Panc1 (cell line): ENCODE measurements at regions of chr16 and their contacts with region 1.

Region 1: GRCh38 chr16:46853713-46854443 is 22.9 kb upstream of the C16orf87 start:
- DNase-seq: peak; percentile 52
- ATAC-seq: peak; percentile 87
- H3K4me3 ChIP-seq: no peak overlapping the region
- H3K27ac ChIP-seq: no peak overlapping the region
- H3K4me1 ChIP-seq: no peaks in the 10 kb centered on the region
- H3K27me3 ChIP-seq: no peaks in the 10 kb centered on the region
- CTCF ChIP-seq: peak; percentile 87

Region 2: DNA sequence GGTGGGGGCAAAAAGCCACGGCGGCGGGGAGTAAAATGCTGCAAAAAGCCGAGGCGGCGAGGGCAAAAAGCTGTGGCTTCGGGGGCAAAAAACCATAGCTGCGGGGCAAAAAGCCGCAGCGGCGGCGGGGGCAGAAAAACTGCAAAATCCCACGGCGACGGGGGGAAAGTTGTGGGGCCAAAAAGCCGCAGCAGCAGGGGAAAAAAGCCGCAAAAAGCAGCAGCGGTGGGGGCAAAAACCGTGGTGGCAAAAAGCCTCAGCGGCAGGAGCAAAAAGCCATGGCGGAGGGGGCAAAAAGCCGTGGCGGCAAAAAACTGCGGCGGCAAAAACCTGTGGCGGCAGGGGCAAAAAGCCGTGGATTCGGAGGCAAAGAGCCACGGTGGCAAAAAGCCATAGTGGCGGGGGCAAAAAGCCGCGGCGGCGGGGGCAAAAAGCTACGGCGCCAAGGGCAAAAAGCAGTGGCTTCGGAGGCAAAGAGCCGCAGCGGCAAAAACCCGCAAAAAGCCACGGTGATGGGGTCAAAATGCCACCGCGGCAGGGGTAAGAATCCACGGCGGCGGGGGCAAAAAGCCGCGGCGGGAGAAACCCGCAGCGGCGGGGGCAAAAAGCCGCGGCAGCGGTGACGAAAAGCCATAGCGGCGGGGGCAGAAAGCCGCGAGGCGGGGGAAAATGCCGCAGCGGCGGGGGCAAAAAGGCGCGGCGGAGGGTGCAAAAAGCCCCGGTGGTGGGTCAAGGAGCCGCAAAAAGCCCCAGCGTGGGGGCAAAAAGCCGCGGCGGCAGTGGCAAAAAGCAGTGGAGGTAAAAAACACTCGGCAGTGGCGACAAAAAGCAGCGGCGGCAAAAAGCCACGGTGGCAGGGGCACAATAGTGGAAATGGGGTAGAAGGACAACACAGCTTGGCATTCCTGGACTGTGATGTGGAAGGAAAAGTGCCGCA is 425.5 kb before region 1 on chr16:
- CTCF ChIA-PET with region 1: no interaction called
- POLR2A ChIA-PET with region 1: no interaction called
- in situ Hi-C with region 1: no loop called
- intact Hi-C with region 1: no loop called
- DNase-seq: no peak
- ATAC-seq: no peak
- H3K4me3 ChIP-seq: no peak overlapping the region
- H3K27ac ChIP-seq: no peak overlapping the region
- H3K4me1 ChIP-seq: no peaks in the 10 kb centered on the region
- H3K27me3 ChIP-seq: no peaks in the 10 kb centered on the region
- CTCF ChIP-seq: no peak

Region 3: GRCh38 chr16:46908540-46909372 is 54.9 kb after region 1 on chr16:
- CTCF ChIA-PET with region 1: interaction called, 11 read pairs
- POLR2A ChIA-PET with region 1: interaction called, 6 read pairs
- in situ Hi-C with region 1: no loop called
- intact Hi-C with region 1: loop called (anchors 1 kb)
- DNase-seq: peak; percentile 27
- ATAC-seq: peak; percentile 80
- H3K4me3 ChIP-seq: no peak overlapping the region
- H3K27ac ChIP-seq: no peak overlapping the region
- H3K4me1 ChIP-seq: no peaks in the 10 kb centered on the region
- H3K27me3 ChIP-seq: no peaks in the 10 kb centered on the region
- CTCF ChIP-seq: peak; percentile 77